ENCODE measurements at regions of chr13 and their contacts with region 1.

Region 1: GRCh38 chr13:20160847-20161274 is at the start of gene GJA3:
- DNase-seq: peak; percentile 54
- ATAC-seq: peak; percentile 66
- H3K4me3 Mint-ChIP-seq: peak within 1 kb of the TSS; percentile 85
- H3K27ac Mint-ChIP-seq: no peak within 1 kb of the TSS
- H3K4me1 Mint-ChIP-seq: peaks cover 18% of the 10 kb centered on the region
- H3K27me3 Mint-ChIP-seq: peaks cover 7% of the 10 kb centered on the region
- CTCF ChIP-seq: no peak
- total RNA-seq, gene GJA3: 0.09 and 0.10 TPM in 2 replicates

Region 2: GRCh38 chr13:19633479-19634255 is 527.2 kb before region 1 on chr13 and contains the start of gene MPHOSPH8:
- CTCF ChIA-PET with region 1: no interaction called
- POLR2A ChIA-PET with region 1: no interaction called
- intact Hi-C with region 1: loop called (anchors 5 kb)
- DNase-seq: peak; percentile 82
- ATAC-seq: peak; percentile 97
- H3K4me3 Mint-ChIP-seq: peak within 1 kb of the TSS; percentile 100
- H3K27ac Mint-ChIP-seq: peak within 1 kb of the TSS; percentile 98
- H3K4me1 Mint-ChIP-seq: peaks cover 38% of the 10 kb centered on the region
- H3K27me3 Mint-ChIP-seq: no peaks in the 10 kb centered on the region
- CTCF ChIP-seq: no peak
- total RNA-seq, gene MPHOSPH8: 32.5 and 43.6 TPM in 2 replicates

Region 3: GRCh38 chr13:19863323-19864023 is 297.4 kb before region 1 on chr13 and contains the start of gene ZMYM5:
- CTCF ChIA-PET with region 1: no interaction called
- POLR2A ChIA-PET with region 1: interaction called, 3 read pairs
- intact Hi-C with region 1: loop called (anchors 2 kb)
- DNase-seq: peak; percentile 93
- ATAC-seq: peak; percentile 88
- H3K4me3 Mint-ChIP-seq: peak within 1 kb of the TSS; percentile 89
- H3K27ac Mint-ChIP-seq: peak within 1 kb of the TSS; percentile 96
- H3K4me1 Mint-ChIP-seq: peaks cover 30% of the 10 kb centered on the region
- H3K27me3 Mint-ChIP-seq: no peaks in the 10 kb centered on the region
- CTCF ChIP-seq: no peak
- total RNA-seq, gene ZMYM5: 14.1 and 17.1 TPM in 2 replicates

Region 4: GRCh38 chr13:19959831-19960652 is 200.8 kb before region 1 on chr13:
- CTCF ChIA-PET with region 1: no interaction called
- POLR2A ChIA-PET with region 1: no interaction called
- intact Hi-C with region 1: loop called (anchors 1 kb)
- DNase-seq: peak; percentile 60
- ATAC-seq: peak; percentile 43
- H3K4me3 Mint-ChIP-seq: peak overlapping the region; percentile 98
- H3K27ac Mint-ChIP-seq: peak overlapping the region; percentile 98
- H3K4me1 Mint-ChIP-seq: peaks cover 33% of the 10 kb centered on the region
- H3K27me3 Mint-ChIP-seq: no peaks in the 10 kb centered on the region
- CTCF ChIP-seq: no peak

Region 5: DNA sequence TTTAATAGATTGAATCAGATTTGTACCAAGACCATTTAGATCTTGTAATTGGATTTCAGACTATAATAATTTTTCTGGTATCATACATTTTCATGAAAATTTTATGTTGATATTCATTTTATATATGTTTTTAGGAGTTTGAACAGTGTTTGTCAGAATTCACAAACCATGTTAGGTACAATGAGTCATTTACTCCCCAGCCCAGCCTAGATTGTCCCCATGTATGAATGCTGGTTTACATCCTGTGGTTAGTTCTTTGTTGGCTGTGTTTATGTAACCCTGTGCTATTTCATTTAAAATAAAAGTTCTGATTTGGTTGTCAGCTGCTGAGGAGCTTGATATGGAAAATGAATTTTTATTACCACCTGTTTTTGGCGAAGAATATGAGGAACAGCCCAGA is 96.7 kb before region 1 on chr13:
- CTCF ChIA-PET with region 1: no interaction called
- POLR2A ChIA-PET with region 1: no interaction called
- intact Hi-C with region 1: loop called (anchors 5 kb)
- DNase-seq: no peak
- ATAC-seq: no peak
- H3K4me3 Mint-ChIP-seq: no peak overlapping the region
- H3K27ac Mint-ChIP-seq: no peak overlapping the region
- H3K4me1 Mint-ChIP-seq: no peaks in the 10 kb centered on the region
- H3K27me3 Mint-ChIP-seq: no peaks in the 10 kb centered on the region
- CTCF ChIP-seq: no peak

Region 6: GRCh38 chr13:20127577-20128466 is 33.0 kb before region 1 on chr13:
- CTCF ChIA-PET with region 1: interaction called, 4 read pairs
- POLR2A ChIA-PET with region 1: interaction called, 6 read pairs
- intact Hi-C with region 1: loop called (anchors 1 kb)
- DNase-seq: peak; percentile 31
- ATAC-seq: peak; percentile 67
- H3K4me3 Mint-ChIP-seq: peak overlapping the region; percentile 66
- H3K27ac Mint-ChIP-seq: no peak overlapping the region
- H3K4me1 Mint-ChIP-seq: peaks cover 11% of the 10 kb centered on the region
- H3K27me3 Mint-ChIP-seq: peaks cover 22% of the 10 kb centered on the region
- CTCF ChIP-seq: no peak

Region 7: GRCh38 chr13:20301403-20302071 is 140.7 kb after region 1 on chr13:
- CTCF ChIA-PET with region 1: no interaction called
- POLR2A ChIA-PET with region 1: no interaction called
- intact Hi-C with region 1: no loop called
- DNase-seq: no peak
- ATAC-seq: no peak
- H3K4me3 Mint-ChIP-seq: no peak overlapping the region
- H3K27ac Mint-ChIP-seq: no peak overlapping the region
- H3K4me1 Mint-ChIP-seq: no peaks in the 10 kb centered on the region
- H3K27me3 Mint-ChIP-seq: peaks cover 37% of the 10 kb centered on the region
- CTCF ChIP-seq: no peak

Region 8: GRCh38 chr13:20320885-20321284 is 160.0 kb after region 1 on chr13:
- CTCF ChIA-PET with region 1: no interaction called
- POLR2A ChIA-PET with region 1: no interaction called
- intact Hi-C with region 1: no loop called
- DNase-seq: no peak
- ATAC-seq: no peak
- H3K4me3 Mint-ChIP-seq: no peak overlapping the region
- H3K27ac Mint-ChIP-seq: no peak overlapping the region
- H3K4me1 Mint-ChIP-seq: no peaks in the 10 kb centered on the region
- H3K27me3 Mint-ChIP-seq: peaks cover 12% of the 10 kb centered on the region
- CTCF ChIP-seq: no peak